ENCODE measurements at regions of chr11 and their contacts with region 1.

Region 1: DNA sequence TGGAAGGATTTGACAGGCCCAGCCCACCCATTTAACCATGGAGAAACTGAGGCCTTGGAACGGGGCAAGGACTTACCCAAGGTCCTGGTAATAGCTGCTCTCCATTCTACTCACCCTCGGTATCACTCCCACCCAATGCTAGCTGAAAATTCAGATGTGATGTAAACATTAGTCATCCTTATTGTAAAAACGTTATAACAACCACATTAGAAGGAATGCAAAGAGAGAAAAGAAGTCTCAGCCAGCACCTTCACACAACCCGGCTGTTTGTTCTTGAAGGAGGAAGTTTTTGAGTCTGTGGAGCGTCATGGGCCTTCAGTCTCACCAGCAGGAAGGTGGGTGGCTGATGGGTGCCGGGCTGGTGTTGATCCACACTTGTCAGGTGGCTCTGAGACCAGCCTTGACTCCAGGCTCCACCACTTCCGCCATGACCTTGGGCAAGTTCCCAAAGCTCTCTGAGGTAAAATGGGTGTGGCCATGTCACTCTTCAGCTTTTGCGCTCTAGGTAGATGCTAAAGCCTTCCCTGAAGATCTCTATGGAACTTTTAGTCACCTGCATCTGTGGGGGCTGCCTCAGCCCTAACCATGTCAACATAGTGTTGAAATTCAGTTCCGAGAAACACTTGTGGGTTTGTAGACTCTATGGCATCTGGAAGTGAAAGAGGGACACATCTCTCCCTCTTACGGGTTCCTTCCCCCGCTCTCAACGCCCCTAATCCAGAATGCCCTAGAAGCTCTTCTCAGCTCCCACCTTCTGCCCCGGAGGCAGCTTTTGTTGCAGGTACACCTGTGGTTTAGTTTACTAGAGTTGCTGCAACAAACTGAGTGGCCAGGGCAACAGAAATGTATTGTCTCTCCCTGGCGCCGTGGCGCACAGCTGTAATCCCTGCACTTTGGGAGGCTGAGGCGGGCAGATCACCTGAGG is 14.8 kb downstream of the CD6 start:
- DNase-seq: peak; percentile 76 to 98 (median 95)
- ATAC-seq: peak; percentile 87 to 91
- H3K4me3 Mint-ChIP-seq: peak overlapping the region; percentile 54 to 85 (median 76)
- H3K27ac Mint-ChIP-seq: peak overlapping the region; percentile 93 to 100 (median 99)
- H3K4me1 Mint-ChIP-seq: peaks cover 44 to 93% (median 90%) of the 10 kb centered on the region in 4 donors
- H3K27me3 Mint-ChIP-seq: no peaks in the 10 kb centered on the region

Region 2: DNA sequence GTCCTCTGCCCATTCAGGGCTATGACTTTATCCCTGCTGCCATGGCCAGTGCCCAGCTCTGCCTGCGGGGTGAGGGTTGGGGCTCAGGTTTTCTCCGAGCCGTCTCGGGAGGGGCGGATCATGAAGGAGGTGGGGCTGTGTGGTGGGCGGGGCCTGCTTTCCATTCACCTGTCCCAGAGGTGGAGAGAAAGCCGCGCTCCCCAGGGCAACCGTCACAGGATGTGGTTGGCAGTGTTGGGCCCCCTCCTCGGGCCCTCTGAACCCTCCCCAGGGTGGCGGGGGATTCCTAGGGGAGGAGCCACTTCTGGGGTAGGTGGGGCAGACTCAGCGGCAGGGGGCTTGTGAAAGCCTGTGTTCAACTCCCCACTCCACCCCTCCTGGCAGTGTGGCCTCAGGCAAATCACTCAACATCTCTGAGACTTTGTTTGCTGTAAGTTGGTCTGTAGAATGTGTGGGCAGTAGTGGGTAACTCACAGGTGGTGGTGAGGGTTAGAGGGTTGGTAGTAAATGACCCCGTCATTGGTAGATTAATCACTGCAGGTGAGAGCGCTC is 35.5 kb after region 1 on chr11:
- POLR2A ChIA-PET with region 1: interaction called, 52 read pairs
- DNase-seq: peak; percentile 72 to 97 (median 93)
- ATAC-seq: peak; percentile 60 to 81
- H3K4me3 Mint-ChIP-seq: peak overlapping the region; percentile 68 to 86 (median 76)
- H3K27ac Mint-ChIP-seq: peak overlapping the region; percentile 89 to 100 (median 98)
- H3K4me1 Mint-ChIP-seq: peaks cover 44 to 85% (median 72%) of the 10 kb centered on the region in 4 donors
- H3K27me3 Mint-ChIP-seq: no peaks in the 10 kb centered on the region

Region 3: GRCh38 chr11:61028272-61028761 is 42.1 kb after region 1 on chr11:
- POLR2A ChIA-PET with region 1: interaction called, 52 read pairs
- DNase-seq: peak; percentile 44 to 84 (median 57)
- ATAC-seq: peak; percentile 7 to 31
- H3K4me3 Mint-ChIP-seq: peak overlapping the region; percentile 78 to 98 (median 86)
- H3K27ac Mint-ChIP-seq: peak overlapping the region; percentile 95 to 99 (median 98)
- H3K4me1 Mint-ChIP-seq: peaks cover 41 to 90% (median 80%) of the 10 kb centered on the region in 4 donors
- H3K27me3 Mint-ChIP-seq: no peaks in the 10 kb centered on the region